Natural killer cell (primary cell): ENCODE measurements at regions of chr3 and their contacts with region 1.

Region 1: GRCh38 chr3:194583604-194584318 is 49.5 kb downstream of the TMEM44 start:
- DNase-seq: peak; percentile 94 to 96
- ATAC-seq: peak; percentile 92 to 94 (median 92)
- H3K4me3 ChIP-seq: peak overlapping the region; percentile 97
- H3K4me3 Mint-ChIP-seq: peak overlapping the region; percentile 97
- H3K27ac ChIP-seq: peak overlapping the region; percentile 95
- H3K27ac Mint-ChIP-seq: peak overlapping the region; percentile 95 to 97
- H3K4me1 ChIP-seq: peaks cover 16% of the 10 kb centered on the region
- H3K4me1 Mint-ChIP-seq: peaks cover 20 to 27% of the 10 kb centered on the region in 2 donors
- H3K27me3 ChIP-seq: no peaks in the 10 kb centered on the region
- H3K27me3 Mint-ChIP-seq: no peaks in the 10 kb centered on the region
- CTCF ChIP-seq: no peak

Region 2: GRCh38 chr3:194346621-194347020 is 237.1 kb before region 1 on chr3:
- intact Hi-C with region 1: no loop called
- DNase-seq: no peak
- ATAC-seq: no peak
- H3K4me3 ChIP-seq: no peak overlapping the region
- H3K4me3 Mint-ChIP-seq: no peak overlapping the region
- H3K27ac ChIP-seq: no peak overlapping the region
- H3K27ac Mint-ChIP-seq: no peak overlapping the region
- H3K4me1 ChIP-seq: no peaks in the 10 kb centered on the region
- H3K4me1 Mint-ChIP-seq: no peaks in the 10 kb centered on the region
- H3K27me3 ChIP-seq: peaks cover 4% of the 10 kb centered on the region
- H3K27me3 Mint-ChIP-seq: peaks cover 11 to 22% of the 10 kb centered on the region in 2 donors
- CTCF ChIP-seq: no peak

Region 3: GRCh38 chr3:194486540-194487288 is 97.0 kb before region 1 on chr3 and contains the start of gene ATP13A3:
- intact Hi-C with region 1: loop called (anchors 2 kb)
- DNase-seq: peak; percentile 87 to 96
- ATAC-seq: peak; percentile 77 to 94 (median 82)
- H3K4me3 ChIP-seq: peak within 1 kb of the TSS; percentile 64
- H3K4me3 Mint-ChIP-seq: peak within 1 kb of the TSS; percentile 95
- H3K27ac ChIP-seq: peak within 1 kb of the TSS; percentile 87
- H3K27ac Mint-ChIP-seq: peak within 1 kb of the TSS; percentile 89 to 90
- H3K4me1 ChIP-seq: peaks cover 31% of the 10 kb centered on the region
- H3K4me1 Mint-ChIP-seq: peaks cover 34 to 40% of the 10 kb centered on the region in 2 donors
- H3K27me3 ChIP-seq: no peaks in the 10 kb centered on the region
- H3K27me3 Mint-ChIP-seq: no peaks in the 10 kb centered on the region
- CTCF ChIP-seq: no peak
- total RNA-seq, gene ATP13A3: 62.9 to 79.2 (median 64.2) TPM